Activated CD4-positive, alpha-beta T cell treated with anti-CD3 and anti-CD28 coated beads for 36 hours (primary cell): ENCODE measurements at regions of chr21 and their contacts with region 1.

Region 1: DNA sequence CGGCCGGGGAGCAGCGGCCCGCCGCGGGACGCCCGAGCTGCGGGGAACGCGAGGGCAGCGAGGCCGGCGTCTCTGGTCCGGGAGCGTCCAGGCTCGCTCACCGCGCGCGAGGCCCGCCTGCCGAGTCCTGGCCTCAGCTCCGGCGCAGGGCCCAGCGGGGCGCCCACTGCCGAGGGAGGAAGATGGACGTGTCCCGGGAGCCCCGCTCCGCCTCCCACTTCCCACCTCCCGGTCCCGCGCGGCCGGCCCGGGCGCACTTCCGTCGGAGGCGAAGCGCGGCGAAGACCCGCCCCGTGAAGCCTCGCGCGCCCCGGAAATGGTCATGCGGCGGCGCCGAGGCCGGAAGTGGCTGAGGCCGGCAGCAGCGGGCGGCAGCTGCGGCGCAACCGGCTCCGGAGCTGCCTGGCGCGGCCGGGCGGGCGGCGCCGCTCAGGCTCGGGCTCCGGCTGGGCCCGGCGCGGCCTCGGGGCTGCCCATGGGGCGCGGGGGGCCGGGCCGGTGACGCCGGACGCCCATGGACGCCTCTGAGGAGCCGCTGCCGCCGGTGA is at the start of gene TRAPPC10:
- DNase-seq: peak; percentile 90
- ATAC-seq: peak; percentile 72
- H3K4me3 Mint-ChIP-seq: peak within 1 kb of the TSS; percentile 87
- H3K27ac Mint-ChIP-seq: peak within 1 kb of the TSS; percentile 93
- H3K4me1 Mint-ChIP-seq: peaks cover 42% of the 10 kb centered on the region
- H3K27me3 Mint-ChIP-seq: no peaks in the 10 kb centered on the region
- total RNA-seq, gene TRAPPC10: 40.2 to 58.7 TPM

Region 2: DNA sequence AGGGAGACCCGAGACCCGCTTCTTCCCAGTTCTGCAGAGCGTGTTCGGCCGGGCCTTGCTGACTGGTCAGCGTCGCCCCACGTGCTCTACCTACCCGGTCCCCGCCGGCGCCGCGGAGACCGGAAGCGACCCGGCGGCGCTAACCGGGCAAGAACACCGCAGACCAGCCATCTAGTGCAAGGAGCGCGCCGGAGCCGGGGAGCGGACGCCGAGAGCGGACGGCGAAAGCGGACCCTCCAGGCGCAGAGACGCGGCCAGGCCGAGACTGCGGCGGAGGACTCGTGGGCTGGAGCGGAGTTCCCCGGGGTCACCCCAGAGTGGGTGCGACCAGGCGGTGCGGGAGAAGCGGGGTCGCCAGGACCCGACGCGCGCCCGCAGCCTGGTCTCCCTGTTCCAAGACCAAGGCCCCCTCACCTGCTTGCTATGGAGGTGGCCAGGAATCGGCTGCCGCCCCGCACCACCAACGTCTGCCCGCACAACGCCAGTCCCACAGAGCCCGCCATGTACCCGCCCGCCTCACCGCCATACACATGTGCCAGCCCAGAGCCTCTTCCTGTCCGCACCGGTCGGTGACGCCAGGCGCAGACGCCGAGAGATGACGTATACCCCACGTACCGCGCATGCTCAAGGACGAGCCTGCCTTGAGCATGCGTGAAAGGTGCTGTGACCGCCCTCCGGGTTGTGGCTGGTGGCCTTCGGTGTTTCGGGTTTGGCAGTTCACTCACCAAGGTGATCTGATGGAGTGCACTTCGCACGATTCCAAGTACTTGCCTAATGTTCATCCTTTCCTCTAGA is 1132.9 kb before region 1 on chr21 and contains the start of gene WDR4:
- CTCF ChIA-PET with region 1: no interaction called
- POLR2A ChIA-PET with region 1: no interaction called
- intact Hi-C with region 1: loop called in 1 of 2 experiments (anchors 2 kb)
- DNase-seq: peak; percentile 99
- ATAC-seq: peak; percentile 93
- H3K4me3 Mint-ChIP-seq: peak within 1 kb of the TSS; percentile 92
- H3K27ac Mint-ChIP-seq: peak within 1 kb of the TSS; percentile 99
- H3K4me1 Mint-ChIP-seq: peaks cover 17% of the 10 kb centered on the region
- H3K27me3 Mint-ChIP-seq: no peaks in the 10 kb centered on the region
- total RNA-seq, gene WDR4: 34.0 to 46.5 TPM

Region 3: DNA sequence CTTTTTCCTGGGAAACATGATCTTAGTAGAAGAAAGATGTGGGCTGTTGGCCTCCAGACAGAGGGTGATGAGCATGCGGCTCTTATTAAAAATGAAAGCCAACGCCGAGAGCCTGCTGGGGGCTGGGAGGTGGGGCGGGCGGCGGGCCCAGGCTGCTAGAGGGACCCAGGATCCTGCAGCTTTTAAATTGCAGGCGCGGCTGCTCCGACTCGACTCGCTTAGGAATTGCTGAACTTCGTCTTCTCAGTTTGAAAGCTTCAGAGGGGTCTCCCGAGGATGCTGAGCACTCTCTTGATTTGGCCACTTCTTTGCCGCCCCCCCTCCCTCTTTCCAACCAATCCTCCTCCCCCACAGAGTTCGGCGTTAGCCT is 145.8 kb before region 1 on chr21:
- CTCF ChIA-PET with region 1: interaction called, 3 read pairs
- POLR2A ChIA-PET with region 1: no interaction called
- intact Hi-C with region 1: loop called in 1 of 2 experiments (anchors 1 kb)
- DNase-seq: peak; percentile 81
- ATAC-seq: peak; percentile 56
- H3K4me3 Mint-ChIP-seq: peak overlapping the region; percentile 79
- H3K27ac Mint-ChIP-seq: peak overlapping the region; percentile 95
- H3K4me1 Mint-ChIP-seq: peaks cover 44% of the 10 kb centered on the region
- H3K27me3 Mint-ChIP-seq: no peaks in the 10 kb centered on the region

Region 4: GRCh38 chr21:43899307-43900077 is 112.6 kb before region 1 on chr21:
- CTCF ChIA-PET with region 1: no interaction called
- POLR2A ChIA-PET with region 1: no interaction called
- intact Hi-C with region 1: no loop called
- DNase-seq: no peak
- ATAC-seq: no peak
- H3K4me3 Mint-ChIP-seq: no peak overlapping the region
- H3K27ac Mint-ChIP-seq: no peak overlapping the region
- H3K4me1 Mint-ChIP-seq: peaks cover 9% of the 10 kb centered on the region
- H3K27me3 Mint-ChIP-seq: no peaks in the 10 kb centered on the region

Region 5: DNA sequence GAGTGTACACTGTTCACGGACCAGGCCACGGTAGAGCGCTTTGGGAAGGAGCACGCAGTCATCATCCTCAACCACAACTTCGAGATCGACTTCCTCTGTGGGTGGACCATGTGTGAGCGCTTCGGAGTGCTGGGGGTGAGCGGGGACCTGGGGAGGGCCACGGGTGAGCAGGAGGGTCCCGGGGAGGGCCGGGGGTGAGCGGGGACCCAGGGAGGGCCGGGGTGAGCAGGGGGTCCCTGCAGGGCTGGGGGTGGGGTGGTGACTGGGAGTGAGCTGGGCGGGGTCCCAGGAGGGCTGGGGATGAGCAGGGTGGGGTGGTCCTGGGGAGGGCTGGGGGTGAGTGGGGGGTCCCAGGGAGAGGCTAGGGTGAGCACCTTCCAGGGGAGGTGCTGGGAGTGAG is 44.1 kb before region 1 on chr21:
- CTCF ChIA-PET with region 1: no interaction called
- POLR2A ChIA-PET with region 1: no interaction called
- intact Hi-C with region 1: no loop called
- DNase-seq: no peak
- ATAC-seq: no peak
- H3K4me3 Mint-ChIP-seq: no peak overlapping the region
- H3K27ac Mint-ChIP-seq: no peak overlapping the region
- H3K4me1 Mint-ChIP-seq: peaks cover 2% of the 10 kb centered on the region
- H3K27me3 Mint-ChIP-seq: no peaks in the 10 kb centered on the region

Region 6: DNA sequence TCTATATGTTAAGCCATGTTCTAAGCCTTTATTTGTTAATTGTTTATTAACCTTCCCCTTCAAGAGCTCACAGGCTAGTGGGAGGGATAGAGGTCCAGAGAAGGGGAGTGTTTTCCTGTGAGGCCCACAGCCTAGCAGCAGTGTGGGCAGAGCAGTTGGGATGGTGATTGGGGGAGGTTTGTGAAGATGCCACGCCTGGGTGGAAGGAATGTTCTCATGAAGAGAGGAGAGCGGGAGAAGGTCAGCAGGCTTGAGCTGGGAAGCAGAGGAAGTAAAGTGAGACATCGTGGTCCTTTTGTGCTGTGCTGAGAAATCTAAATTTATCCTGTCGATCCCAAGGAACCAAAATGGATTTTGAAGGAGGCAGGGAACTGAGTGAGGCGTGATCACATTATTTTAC is 42.7 kb after region 1 on chr21:
- CTCF ChIA-PET with region 1: interaction called, 6 read pairs
- POLR2A ChIA-PET with region 1: no interaction called
- intact Hi-C with region 1: loop called in 1 of 2 experiments (anchors 1 kb)
- DNase-seq: no peak
- ATAC-seq: no peak
- H3K4me3 Mint-ChIP-seq: no peak overlapping the region
- H3K27ac Mint-ChIP-seq: peak overlapping the region; percentile 80
- H3K4me1 Mint-ChIP-seq: peaks cover 28% of the 10 kb centered on the region
- H3K27me3 Mint-ChIP-seq: no peaks in the 10 kb centered on the region

Region 7: DNA sequence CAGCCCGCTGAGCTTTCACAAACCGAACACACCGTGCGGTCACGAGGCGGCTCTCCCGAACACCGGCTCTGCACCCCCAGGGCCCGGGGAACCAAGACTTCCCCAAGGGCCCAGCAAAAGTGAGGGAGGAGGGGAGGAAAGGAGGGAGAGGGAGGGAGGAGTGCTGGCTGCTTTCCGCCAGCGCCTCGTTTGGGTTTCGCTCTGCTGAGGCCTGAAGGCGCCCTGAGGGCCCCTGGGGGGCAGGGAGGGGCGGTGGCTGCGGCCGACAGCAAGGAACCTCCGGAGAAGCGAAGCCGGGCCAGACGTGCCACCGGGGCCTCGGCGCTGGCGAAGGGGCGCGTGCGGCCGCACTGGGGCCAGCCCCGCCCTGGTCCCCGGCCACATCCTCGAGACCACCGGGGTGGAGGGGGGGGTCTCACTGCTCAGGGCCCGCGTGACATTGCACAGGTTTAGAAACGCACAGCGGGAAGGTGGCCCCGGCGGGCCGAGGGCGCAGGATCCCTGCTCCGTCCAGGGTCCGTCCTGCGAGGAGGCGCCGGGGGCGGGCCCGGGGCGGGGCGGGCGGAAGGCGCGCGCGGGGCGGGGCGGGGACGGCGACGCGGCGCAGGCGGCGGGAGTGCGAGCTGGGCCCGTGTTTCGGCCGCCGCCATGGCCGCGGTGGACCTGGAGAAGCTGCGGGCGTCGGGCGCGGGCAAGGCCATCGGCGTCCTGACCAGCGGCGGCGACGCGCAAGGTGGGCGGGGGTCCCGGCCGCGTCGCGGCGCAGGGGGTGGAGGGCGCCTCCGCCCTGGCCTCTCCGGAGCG is 287.6 kb after region 1 on chr21 and contains the start of gene PFKL:
- CTCF ChIA-PET with region 1: interaction called, 8 read pairs
- POLR2A ChIA-PET with region 1: interaction called, 3 read pairs
- intact Hi-C with region 1: loop called in 1 of 2 experiments (anchors 1 kb)
- DNase-seq: peak; percentile 82
- ATAC-seq: peak; percentile 63
- H3K4me3 Mint-ChIP-seq: peak within 1 kb of the TSS; percentile 85
- H3K27ac Mint-ChIP-seq: peak within 1 kb of the TSS; percentile 96
- H3K4me1 Mint-ChIP-seq: peaks cover 51% of the 10 kb centered on the region
- H3K27me3 Mint-ChIP-seq: no peaks in the 10 kb centered on the region
- total RNA-seq, gene PFKL: 167 to 202 TPM

Region 8: DNA sequence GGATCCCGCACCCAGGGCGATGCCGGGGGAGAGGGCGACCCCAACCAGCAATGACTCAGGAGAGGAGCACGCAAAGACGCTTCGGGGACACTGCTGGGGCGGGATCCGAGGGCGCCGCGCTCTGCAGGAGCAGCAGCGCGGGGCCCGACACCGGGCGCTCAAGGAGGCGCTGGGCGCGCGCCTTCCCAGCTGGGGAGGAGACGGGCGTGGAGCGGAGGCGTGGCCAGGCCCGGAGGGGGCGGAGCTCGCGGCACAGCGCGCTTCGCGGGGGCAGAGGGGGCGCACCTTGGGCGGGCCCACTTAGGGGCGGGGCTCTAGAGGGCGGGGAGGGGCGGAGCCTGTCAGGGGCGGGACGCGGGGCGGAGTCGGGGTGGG is 805.4 kb after region 1 on chr21:
- CTCF ChIA-PET with region 1: no interaction called
- POLR2A ChIA-PET with region 1: no interaction called
- intact Hi-C with region 1: loop called in 1 of 2 experiments (anchors 1 kb)
- DNase-seq: peak; percentile 97
- ATAC-seq: peak; percentile 92
- H3K4me3 Mint-ChIP-seq: peak overlapping the region; percentile 69
- H3K27ac Mint-ChIP-seq: no peak overlapping the region
- H3K4me1 Mint-ChIP-seq: peaks cover 13% of the 10 kb centered on the region
- H3K27me3 Mint-ChIP-seq: no peaks in the 10 kb centered on the region